ENCODE measurements at regions of chr5 and their contacts with region 1.

Region 1: GRCh38 chr5:146188358-146188757 is 5.9 kb upstream of the LARS1 start:
- DNase-seq: no peak
- H3K4me3 ChIP-seq: no peak overlapping the region
- H3K27ac ChIP-seq: no peak overlapping the region
- H3K4me1 ChIP-seq: peaks cover 0 to 4% (median 1%) of the 10 kb centered on the region in 6 donors
- H3K27me3 ChIP-seq: peaks cover 0 to 7% (median 0%) of the 10 kb centered on the region in 7 donors
- CTCF ChIP-seq: no peak
- POLR2A ChIP-seq: no peak

Region 2: DNA sequence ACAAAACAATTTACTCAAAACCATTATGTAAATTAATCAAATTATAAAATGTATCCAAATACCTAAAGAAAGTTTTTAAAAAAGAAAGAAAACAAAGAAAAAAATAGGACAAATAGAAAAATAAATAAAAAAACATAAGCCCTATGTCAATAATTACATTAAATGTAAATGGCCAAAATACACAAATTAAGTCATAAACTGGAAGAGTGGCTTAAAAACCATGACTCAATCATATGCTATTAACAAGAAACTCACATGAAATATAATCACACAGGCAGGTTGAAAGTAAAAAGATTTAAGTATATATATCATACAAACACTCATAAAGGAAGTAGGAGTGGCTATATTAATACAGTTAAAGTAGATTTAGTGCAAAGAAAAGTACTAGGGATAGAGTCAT is 448.5 kb before region 1 on chr5:
- intact Hi-C with region 1: no loop called
- DNase-seq: no peak
- H3K4me3 ChIP-seq: no peak overlapping the region
- H3K27ac ChIP-seq: no peak overlapping the region
- H3K4me1 ChIP-seq: no peaks in the 10 kb centered on the region
- H3K27me3 ChIP-seq: no peaks in the 10 kb centered on the region
- CTCF ChIP-seq: no peak
- POLR2A ChIP-seq: no peak

Region 3: DNA sequence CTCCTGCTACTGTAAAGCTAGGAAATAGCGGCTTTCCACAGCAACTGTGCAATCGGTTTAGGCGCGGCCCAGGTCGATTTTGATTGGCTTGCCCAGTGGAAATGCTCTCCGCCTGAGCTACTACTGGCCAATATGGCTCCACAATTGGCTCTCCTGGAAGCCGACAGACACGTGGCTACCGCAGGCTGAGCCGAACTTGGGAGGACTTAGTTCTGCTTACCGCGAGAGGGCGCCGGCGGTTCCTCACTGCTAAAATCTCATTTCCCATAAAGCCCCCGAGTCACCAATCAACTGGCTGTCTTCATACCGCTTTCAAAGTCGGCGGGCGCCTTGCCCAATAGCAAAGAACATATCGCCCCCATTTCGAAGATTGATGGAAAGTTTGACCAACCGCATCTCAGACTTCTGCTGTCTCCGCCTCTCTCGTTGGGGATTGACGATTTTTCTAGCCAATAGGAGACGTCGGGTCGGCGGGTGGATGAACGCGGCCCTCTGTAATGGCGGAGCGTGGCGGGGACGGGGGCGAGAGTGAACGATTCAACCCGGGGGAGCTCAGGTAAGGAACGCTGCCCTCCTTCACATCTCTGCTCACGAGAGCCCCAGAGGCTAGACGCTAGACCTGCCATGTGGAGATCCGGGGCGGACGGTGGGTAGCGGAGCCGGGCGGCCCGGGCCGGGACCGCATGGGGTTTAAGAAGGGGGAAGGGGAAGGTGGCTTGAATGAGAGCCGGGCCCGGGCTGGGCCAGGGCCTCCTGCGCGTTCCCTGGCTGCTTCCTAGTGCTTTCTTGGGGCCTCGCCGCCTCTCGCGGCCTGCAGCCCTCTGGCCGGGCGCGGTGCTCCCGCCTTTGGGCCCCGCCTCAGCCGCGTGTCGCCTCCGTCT is 258.7 kb after region 1 on chr5 and contains the start of gene TCERG1:
- intact Hi-C with region 1: loop called (anchors 2 kb)
- DNase-seq: peak; percentile 96
- H3K4me3 ChIP-seq: peak within 1 kb of the TSS; percentile 55 to 100 (median 97)
- H3K27ac ChIP-seq: peak within 1 kb of the TSS; percentile 45 to 95 (median 90)
- H3K4me1 ChIP-seq: peaks cover 23 to 53% (median 43%) of the 10 kb centered on the region in 6 donors
- H3K27me3 ChIP-seq: no peaks in the 10 kb centered on the region
- CTCF ChIP-seq: peak; percentile 53 to 94 (median 85)
- POLR2A ChIP-seq: peak in 1 of 3 donors; percentile 23
- total RNA-seq, gene TCERG1: 63.0 to 117 (median 81.0) TPM

Measured in spleen (tissue), 13 donors.